ENCODE measurements at regions of chr1 and their contacts with region 1.

Region 1: GRCh38 chr1:52033190-52034049 is at the start of gene KTI12:
- DNase-seq: peak; percentile 94
- H3K4me3 ChIP-seq: peak within 1 kb of the TSS; percentile 69 to 90 (median 82)
- H3K27ac ChIP-seq: peak within 1 kb of the TSS; percentile 91 to 96 (median 92)
- H3K4me1 ChIP-seq: peaks cover 0 to 32% (median 22%) of the 10 kb centered on the region in 4 donors
- H3K27me3 ChIP-seq: no peaks in the 10 kb centered on the region
- CTCF ChIP-seq: no peak
- EP300 ChIP-seq: no peak
- POLR2A ChIP-seq: peak; percentile 56 to 62
- total RNA-seq, gene KTI12: 8.2 to 15.0 (median 11.0) TPM

Region 2: DNA sequence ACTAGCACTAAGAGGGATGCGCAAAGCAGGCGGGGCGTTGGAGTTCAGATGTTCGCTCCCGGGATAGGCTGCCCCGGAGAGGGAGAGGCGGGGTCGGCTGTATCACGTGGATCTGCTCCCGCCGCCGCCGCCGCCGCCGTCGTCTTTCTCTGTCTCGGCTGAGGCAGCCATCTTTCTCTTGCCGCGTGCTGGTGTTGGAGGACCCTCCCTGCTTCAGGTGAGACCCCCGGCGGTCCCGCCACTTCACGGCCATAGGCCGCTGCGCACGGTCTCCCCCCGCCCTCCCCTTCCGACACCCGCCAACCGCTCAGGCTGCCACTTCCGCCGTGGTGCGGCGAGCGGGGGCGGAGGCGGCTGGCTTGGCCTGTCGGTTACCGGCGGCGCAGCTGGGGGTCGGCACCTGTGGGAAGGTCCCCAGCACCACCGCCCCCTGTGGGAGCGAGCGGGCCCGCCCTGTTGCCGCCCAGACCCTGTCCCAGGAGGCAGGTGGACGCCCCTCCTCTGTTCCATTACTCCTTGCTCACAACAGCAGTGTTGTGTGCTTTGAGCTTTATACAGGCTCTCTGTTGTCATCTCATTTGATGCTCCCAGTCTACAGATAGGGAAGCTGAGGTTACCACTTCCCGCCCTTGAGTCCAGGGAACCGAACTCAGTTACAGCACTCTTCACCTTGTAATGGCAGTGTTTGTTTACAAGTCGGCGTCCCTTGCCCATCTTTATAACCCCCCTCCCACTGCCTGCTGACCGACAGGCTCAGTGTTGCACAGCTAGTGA is 22.9 kb after region 1 on chr1 and contains the start of gene BTF3L4:
- intact Hi-C with region 1: loop called (anchors 1 kb)
- DNase-seq: peak; percentile 98
- H3K4me3 ChIP-seq: peak within 1 kb of the TSS; percentile 77 to 96 (median 83)
- H3K27ac ChIP-seq: peak within 1 kb of the TSS; percentile 88 to 94 (median 88)
- H3K4me1 ChIP-seq: peaks cover 0 to 46% (median 33%) of the 10 kb centered on the region in 4 donors
- H3K27me3 ChIP-seq: no peaks in the 10 kb centered on the region
- CTCF ChIP-seq: no peak
- EP300 ChIP-seq: no peak
- POLR2A ChIP-seq: peak; percentile 25 to 69
- total RNA-seq, gene BTF3L4: 42.9 to 58.1 (median 51.1) TPM

Measured in sigmoid colon (tissue), 7 donors.